Endothelial cell of umbilical vein (primary cell): ENCODE measurements at regions of chr3 and their contacts with region 1.

Region 1: DNA sequence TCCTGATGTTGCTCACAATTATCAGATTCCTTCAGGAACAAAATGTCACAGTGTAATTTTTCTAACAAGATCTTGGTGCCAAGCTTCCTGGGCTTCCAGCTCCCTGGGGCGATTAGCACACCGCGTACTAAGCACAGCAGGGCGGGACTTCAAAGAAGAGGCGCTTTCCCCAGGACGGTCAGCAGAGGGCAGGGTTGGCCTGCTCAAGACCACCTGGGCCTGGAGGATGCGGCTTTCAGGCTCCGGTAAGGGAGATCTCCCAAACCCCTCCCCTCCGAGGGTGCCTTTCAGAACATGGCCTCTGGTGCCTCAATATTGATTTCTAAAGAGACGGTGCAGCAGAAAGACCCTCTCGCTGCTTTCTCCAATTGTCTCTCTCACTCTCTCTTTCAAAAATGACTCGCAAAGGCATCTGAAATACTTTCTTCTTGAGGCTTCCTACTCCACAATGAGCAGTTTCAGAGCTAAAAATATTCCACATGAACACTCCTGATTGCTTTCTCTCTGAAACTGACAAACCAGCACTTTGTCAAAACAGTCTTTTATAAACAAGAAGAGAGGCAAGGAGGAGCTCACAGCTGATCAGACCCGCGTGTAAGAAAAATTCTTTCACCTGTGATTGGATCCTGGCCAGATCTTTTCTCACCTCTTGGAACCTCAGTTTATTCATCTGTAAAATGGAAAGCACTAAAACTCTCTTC is 154.0 kb downstream of the ADAMTS9 start:
- DNase-seq: peak; percentile 86
- H3K4me3 ChIP-seq: no peak overlapping the region
- H3K27ac ChIP-seq: peak overlapping the region; percentile 4
- H3K4me1 ChIP-seq: no peaks in the 10 kb centered on the region
- H3K27me3 ChIP-seq: no peaks in the 10 kb centered on the region
- CTCF ChIP-seq: peak; percentile 90
- POLR2A ChIP-seq: no peak

Region 2: DNA sequence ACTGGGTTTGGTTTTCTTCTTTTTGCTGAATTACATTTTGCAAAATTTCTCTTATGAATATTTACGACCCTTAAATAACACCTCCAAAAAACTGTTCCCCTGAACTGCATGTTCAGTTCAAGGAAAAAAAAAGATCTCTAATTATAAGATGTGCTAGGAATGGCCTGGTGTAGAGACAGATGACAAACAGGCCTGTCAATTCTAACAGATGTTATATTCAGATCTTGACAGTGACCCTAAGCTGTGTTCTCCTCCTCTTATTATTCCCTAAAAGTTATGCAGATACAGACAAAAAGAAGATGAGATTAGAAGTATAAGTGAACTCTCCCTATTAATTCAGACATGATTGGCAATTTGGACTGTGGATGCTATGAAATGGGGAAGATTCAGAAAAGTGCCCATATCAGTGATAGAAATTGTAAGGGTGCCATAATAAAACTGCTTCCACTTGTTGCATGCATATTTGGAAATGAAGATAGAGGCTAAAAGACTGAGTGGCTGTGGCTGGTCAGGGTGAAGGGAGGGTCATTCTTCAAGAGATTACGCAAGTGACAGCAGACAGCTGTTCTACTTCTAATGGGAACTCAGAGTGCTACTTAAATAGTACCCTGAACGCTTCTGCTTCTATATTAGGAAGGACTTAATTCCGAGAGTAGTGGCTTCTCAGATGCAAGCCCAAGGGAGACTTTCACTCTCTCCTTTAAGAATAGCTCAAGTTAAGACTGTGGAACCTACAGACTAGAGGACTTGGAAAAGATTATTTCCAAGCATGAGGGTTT is 78.5 kb after region 1 on chr3:
- CTCF ChIA-PET with region 1: no interaction called
- POLR2A ChIA-PET with region 1: no interaction called
- dilution Hi-C with region 1: no loop called
- intact Hi-C with region 1: loop called (anchors 1 kb)
- DNase-seq: no peak
- H3K4me3 ChIP-seq: no peak overlapping the region
- H3K27ac ChIP-seq: no peak overlapping the region
- H3K4me1 ChIP-seq: peaks cover 16% of the 10 kb centered on the region
- H3K27me3 ChIP-seq: no peaks in the 10 kb centered on the region
- CTCF ChIP-seq: no peak
- POLR2A ChIP-seq: no peak

Region 3: DNA sequence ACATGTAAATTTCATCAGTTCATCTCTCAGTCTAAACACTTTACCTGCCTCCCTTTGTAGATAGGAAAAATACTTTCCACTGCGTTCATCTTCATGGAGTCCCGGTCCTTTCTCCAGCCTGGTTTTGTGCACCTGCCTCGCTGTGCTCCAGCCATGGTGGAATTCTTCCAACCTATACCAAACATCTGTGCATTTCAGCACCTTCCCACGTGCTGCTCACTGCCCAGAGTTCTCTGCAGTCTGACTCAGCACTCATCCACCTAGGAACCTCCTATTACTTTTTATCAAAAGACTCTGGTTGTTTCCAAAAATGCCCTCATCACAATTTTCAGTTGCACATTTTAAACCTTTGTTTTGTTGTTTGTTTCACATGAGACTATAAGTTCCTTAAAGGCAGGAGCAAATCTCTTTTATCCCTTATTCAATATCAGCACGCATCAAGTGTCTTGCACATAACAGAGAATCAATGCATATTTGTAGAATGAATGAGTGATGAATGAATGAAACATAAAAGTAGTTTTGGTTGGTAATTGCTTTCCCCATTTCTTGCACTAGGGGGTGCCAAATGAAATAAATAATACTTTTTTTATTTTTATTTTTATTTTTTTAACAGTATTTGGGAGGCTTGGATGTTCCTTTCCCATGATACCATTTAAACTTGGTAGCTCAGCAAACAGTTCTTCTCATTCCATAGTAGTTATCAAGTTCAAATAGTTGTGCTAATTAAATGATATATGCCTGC is 184.3 kb after region 1 on chr3:
- CTCF ChIA-PET with region 1: interaction called, 5 read pairs
- POLR2A ChIA-PET with region 1: no interaction called
- dilution Hi-C with region 1: no loop called
- intact Hi-C with region 1: loop called (anchors 1 kb)
- DNase-seq: peak; percentile 32
- H3K4me3 ChIP-seq: no peak overlapping the region
- H3K27ac ChIP-seq: no peak overlapping the region
- H3K4me1 ChIP-seq: no peaks in the 10 kb centered on the region
- H3K27me3 ChIP-seq: no peaks in the 10 kb centered on the region
- CTCF ChIP-seq: peak; percentile 22 to 31
- POLR2A ChIP-seq: no peak

Region 4: GRCh38 chr3:65170390-65171042 is 636.7 kb after region 1 on chr3:
- CTCF ChIA-PET with region 1: interaction called, 61 read pairs
- POLR2A ChIA-PET with region 1: no interaction called
- dilution Hi-C with region 1: no loop called
- intact Hi-C with region 1: loop called (anchors 1 kb)
- DNase-seq: peak; percentile 59
- H3K4me3 ChIP-seq: no peak overlapping the region
- H3K27ac ChIP-seq: no peak overlapping the region
- H3K4me1 ChIP-seq: peaks cover 22% of the 10 kb centered on the region
- H3K27me3 ChIP-seq: no peaks in the 10 kb centered on the region
- CTCF ChIP-seq: peak; percentile 42 to 47
- POLR2A ChIP-seq: no peak

Region 5: GRCh38 chr3:65342084-65342683 is 808.4 kb after region 1 on chr3:
- CTCF ChIA-PET with region 1: interaction called, 8 read pairs
- POLR2A ChIA-PET with region 1: no interaction called
- dilution Hi-C with region 1: no loop called
- intact Hi-C with region 1: loop called (anchors 5 kb)
- DNase-seq: peak; percentile 60
- H3K4me3 ChIP-seq: no peak overlapping the region
- H3K27ac ChIP-seq: no peak overlapping the region
- H3K4me1 ChIP-seq: no peaks in the 10 kb centered on the region
- H3K27me3 ChIP-seq: peaks cover 0 to 2% of the 10 kb centered on the region in 2 experiments
- CTCF ChIP-seq: peak; percentile 83 to 90
- POLR2A ChIP-seq: no peak

Region 6: DNA sequence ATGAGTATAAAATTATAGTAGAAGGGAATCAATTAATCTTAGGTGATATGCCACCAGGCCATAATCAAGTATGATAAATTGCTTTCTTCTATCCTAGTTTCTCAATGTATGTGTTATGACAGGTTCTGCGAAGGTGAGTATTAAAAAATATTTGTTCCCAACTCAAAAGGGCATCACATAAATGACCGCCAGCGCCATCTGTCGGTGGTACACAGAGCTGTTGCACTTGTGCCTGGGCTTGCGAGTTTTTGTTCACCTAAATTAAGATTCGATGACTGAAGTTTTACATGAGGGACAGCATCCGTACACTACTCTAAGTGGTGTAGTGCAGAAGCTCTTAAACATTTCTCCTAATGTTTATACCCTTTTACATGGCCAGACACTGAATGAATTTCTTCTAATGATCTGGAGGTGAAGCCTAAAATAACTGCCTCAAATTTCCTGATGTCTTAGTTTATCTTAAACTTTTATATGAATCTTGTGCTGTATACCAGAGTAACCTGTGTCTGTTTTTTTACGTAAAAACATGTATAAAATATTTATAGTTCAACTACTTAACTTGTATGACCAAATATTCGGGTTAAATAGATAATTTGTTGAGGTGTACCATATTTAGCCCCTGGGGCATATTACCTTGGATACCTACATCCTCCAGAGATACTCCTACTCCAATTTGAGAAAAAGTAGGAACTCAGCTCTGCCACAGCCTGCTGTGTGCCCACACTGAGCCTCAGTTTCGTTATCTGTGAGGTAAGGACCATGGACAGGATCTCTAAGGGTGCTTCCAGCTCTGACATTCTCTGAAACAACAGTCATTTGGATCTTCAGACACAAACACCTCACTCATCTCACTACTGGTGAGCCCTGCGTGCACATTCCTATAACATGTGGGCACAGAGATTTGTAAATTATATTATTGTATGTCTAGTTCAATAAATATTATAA is 1139.4 kb after region 1 on chr3:
- CTCF ChIA-PET with region 1: interaction called, 13 read pairs
- POLR2A ChIA-PET with region 1: no interaction called
- dilution Hi-C with region 1: no loop called
- intact Hi-C with region 1: loop called (anchors 2 kb)
- DNase-seq: peak; percentile 50
- H3K4me3 ChIP-seq: no peak overlapping the region
- H3K27ac ChIP-seq: no peak overlapping the region
- H3K4me1 ChIP-seq: no peaks in the 10 kb centered on the region
- H3K27me3 ChIP-seq: no peaks in the 10 kb centered on the region
- CTCF ChIP-seq: peak; percentile 73 to 85
- POLR2A ChIP-seq: no peak

Region 7: GRCh38 chr3:66195347-66195783 is 1661.6 kb after region 1 on chr3:
- CTCF ChIA-PET with region 1: no interaction called
- POLR2A ChIA-PET with region 1: no interaction called
- dilution Hi-C with region 1: no loop called
- intact Hi-C with region 1: loop called (anchors 10 kb)
- DNase-seq: peak; percentile 59
- H3K4me3 ChIP-seq: peak overlapping the region in 1 of 3 experiments; percentile 9
- H3K27ac ChIP-seq: no peak overlapping the region
- H3K4me1 ChIP-seq: peaks cover 3% of the 10 kb centered on the region
- H3K27me3 ChIP-seq: peaks cover 1 to 8% of the 10 kb centered on the region in 2 experiments
- CTCF ChIP-seq: peak; percentile 10 to 20
- POLR2A ChIP-seq: no peak